ENCODE measurements at regions of chr9 and their contacts with region 1.

Region 1: DNA sequence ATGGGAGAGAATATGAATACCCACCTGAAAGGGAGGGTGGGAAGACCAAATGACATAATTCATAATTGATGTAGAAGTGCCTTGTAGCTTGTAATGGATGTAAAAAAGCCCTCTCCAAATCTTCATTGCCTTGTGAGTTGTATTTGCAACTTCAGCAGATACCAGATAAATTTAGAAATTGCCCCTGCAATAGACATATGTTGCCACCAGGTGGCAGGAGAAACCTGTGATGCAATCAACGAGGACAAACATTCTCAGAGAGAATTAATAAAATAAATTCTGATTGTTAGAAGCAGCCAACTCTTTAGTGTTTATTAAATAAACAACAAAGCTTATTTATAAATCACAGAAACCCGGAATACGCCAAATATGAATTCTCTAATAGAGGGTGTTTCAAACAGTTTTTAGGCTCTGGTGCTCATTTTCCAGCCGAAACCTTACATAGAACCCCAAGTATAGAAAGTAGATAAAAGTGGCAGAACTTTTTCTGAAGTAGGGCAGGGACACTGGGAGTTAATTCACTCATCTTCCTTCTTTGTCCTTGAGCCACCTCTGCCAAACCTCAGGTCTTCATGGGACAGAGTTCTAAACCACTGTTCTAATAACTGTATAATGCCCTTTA is 147.8 kb downstream of the TMEM38B start:
- DNase-seq: peak; percentile 48
- H3K4me3 ChIP-seq: no peak overlapping the region; a peak in 1 of 4 replicates
- H3K27ac ChIP-seq: no peak overlapping the region
- H3K4me1 ChIP-seq: no peaks in the 10 kb centered on the region
- H3K27me3 ChIP-seq: no peaks in the 10 kb centered on the region
- CTCF ChIP-seq: peak; percentile 74
- EP300 ChIP-seq: no peak
- RAD21 ChIP-seq: peak; percentile 91

Region 2: DNA sequence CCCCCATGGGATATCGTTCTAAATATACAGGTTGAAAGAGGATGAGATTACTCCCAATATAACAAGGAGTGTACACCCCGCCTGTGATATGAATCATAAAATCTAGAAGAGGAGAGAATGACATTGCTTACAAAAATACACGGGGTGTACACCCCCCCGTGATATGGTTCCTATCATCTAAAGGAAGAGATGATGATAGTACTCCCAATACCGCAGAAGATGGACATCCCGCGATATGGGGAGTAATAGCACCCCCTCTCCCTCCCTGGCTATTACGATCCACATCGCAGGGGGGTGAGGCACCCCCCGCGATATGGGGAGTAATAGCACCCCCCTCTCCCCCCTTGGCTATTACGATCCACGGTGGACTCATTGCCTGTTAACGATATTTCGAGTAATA is 23.2 kb before region 1 on chr9:
- CTCF ChIA-PET with region 1: no interaction called
- POLR2A ChIA-PET with region 1: no interaction called
- DNase-seq: no peak
- H3K4me3 ChIP-seq: no peak overlapping the region
- H3K27ac ChIP-seq: no peak overlapping the region
- H3K4me1 ChIP-seq: no peaks in the 10 kb centered on the region
- H3K27me3 ChIP-seq: no peaks in the 10 kb centered on the region
- CTCF ChIP-seq: no peak
- EP300 ChIP-seq: no peak
- RAD21 ChIP-seq: no peak

Region 3: DNA sequence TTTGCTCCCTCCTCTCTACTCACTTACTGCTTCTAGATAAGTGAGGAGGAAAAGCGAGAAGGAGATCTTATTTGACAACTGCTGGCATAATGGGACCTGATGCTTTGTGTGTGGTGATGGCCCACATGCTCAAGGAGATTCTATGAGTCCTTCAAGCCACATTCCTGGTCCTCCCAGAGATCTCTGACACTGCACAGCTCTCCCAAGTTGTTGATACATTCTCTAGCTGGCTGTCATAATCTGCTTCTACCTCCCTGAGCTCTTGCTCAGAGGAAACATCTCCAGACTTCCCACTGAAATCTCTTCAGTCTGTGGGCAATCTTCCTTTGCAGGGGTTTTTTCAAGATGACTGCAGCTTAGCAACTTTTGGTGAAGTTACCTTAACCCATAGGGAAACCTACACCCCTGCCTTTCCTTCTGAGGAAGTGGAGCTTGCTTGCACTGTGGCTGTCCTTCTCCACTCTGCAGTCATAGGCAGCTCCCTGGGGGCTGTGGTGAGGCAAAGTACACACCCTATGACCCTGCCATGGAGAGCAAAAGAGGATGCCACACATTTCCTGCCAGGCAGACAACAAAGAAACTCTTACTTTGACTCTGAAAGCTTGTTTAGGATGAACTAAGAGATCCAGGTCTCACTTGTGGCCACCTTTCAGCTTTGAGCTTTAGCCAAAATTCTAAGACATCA is 16.0 kb after region 1 on chr9:
- CTCF ChIA-PET with region 1: interaction called, 21 read pairs
- POLR2A ChIA-PET with region 1: no interaction called
- DNase-seq: no peak
- H3K4me3 ChIP-seq: no peak overlapping the region
- H3K27ac ChIP-seq: no peak overlapping the region
- H3K4me1 ChIP-seq: peaks cover 0 to 16% of the 10 kb centered on the region in 2 experiments; a peak in 2 of 4 replicates
- H3K27me3 ChIP-seq: no peaks in the 10 kb centered on the region
- CTCF ChIP-seq: no peak
- EP300 ChIP-seq: no peak
- RAD21 ChIP-seq: no peak

Region 4: GRCh38 chr9:105873801-105874200 is 31.7 kb after region 1 on chr9:
- CTCF ChIA-PET with region 1: interaction called, 144 read pairs
- POLR2A ChIA-PET with region 1: interaction called, 3 read pairs
- DNase-seq: no peak
- H3K4me3 ChIP-seq: no peak overlapping the region
- H3K27ac ChIP-seq: no peak overlapping the region
- H3K4me1 ChIP-seq: peaks cover 0 to 5% of the 10 kb centered on the region in 2 experiments; a peak in 1 of 4 replicates
- H3K27me3 ChIP-seq: no peaks in the 10 kb centered on the region
- CTCF ChIP-seq: no peak
- EP300 ChIP-seq: no peak
- RAD21 ChIP-seq: no peak

Region 5: DNA sequence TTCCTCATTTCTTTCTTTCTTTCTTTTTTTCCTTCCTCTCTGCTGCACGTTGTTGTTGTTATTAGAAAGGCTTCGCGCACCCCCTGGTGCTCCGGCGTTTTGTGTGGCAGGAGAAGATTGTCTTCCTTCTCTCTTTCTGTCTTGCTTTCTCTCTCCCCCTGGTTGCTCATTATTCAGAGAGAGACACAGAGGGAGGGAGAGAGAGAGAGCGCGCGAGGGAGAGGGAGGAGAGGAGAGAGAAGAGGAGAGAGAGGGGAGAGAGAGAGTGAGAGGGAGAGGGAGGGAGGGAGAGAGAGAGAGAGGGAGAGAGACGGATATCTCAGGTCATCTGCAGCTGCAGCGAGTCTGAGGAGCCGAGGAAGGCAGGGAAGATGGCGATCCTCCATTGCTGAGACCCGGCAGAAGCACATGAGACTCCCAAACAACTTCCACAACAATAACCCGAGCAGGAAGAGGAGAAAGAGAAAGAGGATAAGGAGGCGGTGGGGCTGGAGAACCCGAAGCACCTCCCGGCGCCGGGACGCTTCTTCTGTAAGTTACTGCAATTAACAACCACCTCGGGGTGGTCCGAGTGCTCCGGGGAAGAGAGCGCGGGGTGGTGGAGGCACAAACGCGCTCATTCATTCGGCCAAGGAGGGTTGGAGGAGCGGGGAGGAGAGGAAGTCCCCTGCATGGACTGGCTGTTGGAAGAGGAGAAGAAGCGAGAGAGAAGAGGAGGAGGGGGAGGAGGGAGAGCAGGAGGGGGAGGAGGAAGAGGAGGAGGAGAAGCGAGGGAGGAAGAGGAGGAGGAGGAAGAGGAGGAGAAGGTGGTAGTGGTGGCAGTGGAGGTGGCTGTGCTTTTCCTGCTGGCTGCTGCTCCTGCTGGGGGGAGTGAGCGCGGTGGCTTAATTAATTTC is 1020.9 kb after region 1 on chr9 and contains the start of gene ZNF462:
- CTCF ChIA-PET with region 1: interaction called, 21 read pairs
- POLR2A ChIA-PET with region 1: interaction called, 4 read pairs
- DNase-seq: peak; percentile 59
- H3K4me3 ChIP-seq: peak within 1 kb of the TSS; percentile 64 to 91
- H3K27ac ChIP-seq: peak within 1 kb of the TSS; percentile 84 to 96
- H3K4me1 ChIP-seq: no peaks in the 10 kb centered on the region; a peak in 2 of 4 replicates
- H3K27me3 ChIP-seq: no peaks in the 10 kb centered on the region; the same call in 1 of the 2 replicates
- CTCF ChIP-seq: peak; percentile 48
- EP300 ChIP-seq: no peak
- RAD21 ChIP-seq: peak; percentile 68
- polyA plus RNA-seq, gene ZNF462: 5.2 and 5.5 TPM in 2 replicates

Measured in SK-N-SH (cell line).